Activated CD4-positive, alpha-beta T cell treated with anti-CD3 and anti-CD28 coated beads for 36 hours (primary cell): ENCODE measurements at regions of chr7 and their contacts with region 1.

Region 1: DNA sequence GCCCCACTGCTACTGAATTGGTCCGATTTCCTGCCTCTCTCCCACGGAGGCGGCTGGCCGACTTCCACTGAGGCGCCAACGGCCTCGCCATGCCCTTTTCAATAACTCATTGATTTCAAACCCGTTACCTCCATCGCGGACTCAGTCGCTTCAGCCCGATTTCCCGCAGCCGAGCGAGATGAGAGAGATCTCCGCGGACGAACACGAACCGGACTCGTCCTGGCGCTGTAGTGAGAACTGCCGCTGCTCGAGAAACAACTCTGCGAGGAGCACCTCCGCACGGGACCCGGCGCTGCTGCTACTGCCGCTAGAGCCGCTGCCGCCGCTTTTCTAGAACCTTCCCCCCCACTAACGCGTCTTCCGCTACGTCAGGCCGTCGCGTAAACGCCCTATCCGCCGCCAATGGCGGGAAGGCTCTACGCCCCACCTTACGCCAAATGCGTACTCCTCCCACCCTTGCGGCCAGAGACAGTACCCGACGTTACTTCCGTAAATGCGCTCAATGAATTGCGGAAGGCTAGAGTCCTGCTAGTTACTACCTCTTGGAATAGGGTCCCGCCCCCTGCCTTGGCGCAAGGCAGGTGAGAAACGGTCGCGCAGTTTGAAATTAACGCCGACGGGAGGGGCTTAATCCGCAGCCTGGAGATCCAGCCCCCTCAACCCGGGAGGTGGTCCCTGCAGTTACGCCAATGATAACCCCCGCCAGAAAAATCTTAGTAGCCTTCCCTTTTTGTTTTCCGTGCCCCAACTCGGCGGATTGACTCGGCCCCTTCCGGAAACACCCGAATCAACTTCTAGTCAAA is at the start of gene HNRNPA2B1:
- DNase-seq: peak; percentile 97
- ATAC-seq: peak; percentile 71
- H3K4me3 Mint-ChIP-seq: peak within 1 kb of the TSS; percentile 100
- H3K27ac Mint-ChIP-seq: peak within 1 kb of the TSS; percentile 100
- H3K4me1 Mint-ChIP-seq: peaks cover 36% of the 10 kb centered on the region
- H3K27me3 Mint-ChIP-seq: no peaks in the 10 kb centered on the region
- total RNA-seq, gene HNRNPA2B1: 600 to 996 TPM

Region 2: DNA sequence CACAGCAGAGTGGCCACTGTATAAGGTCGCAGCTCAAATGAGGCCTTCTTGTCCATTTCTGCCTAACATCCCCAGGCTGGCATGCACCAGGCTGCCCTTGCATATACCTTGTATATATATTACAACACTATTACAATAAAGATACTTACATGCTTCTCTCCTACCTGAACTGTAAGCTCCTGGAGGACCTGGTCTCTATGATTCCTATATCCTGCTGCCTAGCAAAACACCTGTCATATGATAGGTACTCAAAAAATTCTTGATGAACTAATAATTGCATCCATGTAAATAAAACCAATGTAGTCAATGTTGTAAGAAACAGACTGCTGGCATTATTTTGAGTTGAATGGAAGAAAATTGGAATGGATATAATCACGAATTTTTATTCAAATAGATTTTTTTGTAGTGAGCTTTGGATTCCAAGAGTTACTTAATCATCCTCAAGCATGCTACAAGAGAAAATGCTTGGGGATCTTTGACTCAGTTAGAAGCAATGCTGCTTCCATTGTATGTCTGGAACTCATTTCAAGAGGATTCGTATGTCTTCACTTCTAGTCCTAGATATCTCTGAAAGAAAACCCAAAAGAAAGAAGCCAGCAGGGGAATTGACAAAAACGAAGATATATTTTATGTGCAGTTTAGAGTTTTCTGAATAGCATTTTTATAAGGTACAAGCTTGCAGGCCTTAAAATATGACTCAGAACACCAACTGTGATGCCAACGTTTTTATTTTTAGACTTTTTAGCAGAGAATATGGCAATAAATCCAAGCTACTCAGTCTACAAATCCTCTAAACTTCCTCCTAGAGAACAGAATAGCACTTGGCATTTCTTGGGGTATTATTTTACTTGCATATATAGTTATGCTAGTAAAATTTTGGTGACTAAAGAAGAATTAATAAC is 1273.8 kb before region 1 on chr7:
- CTCF ChIA-PET with region 1: no interaction called
- POLR2A ChIA-PET with region 1: no interaction called
- intact Hi-C with region 1: no loop called
- DNase-seq: no peak
- ATAC-seq: no peak
- H3K4me3 Mint-ChIP-seq: no peak overlapping the region
- H3K27ac Mint-ChIP-seq: no peak overlapping the region
- H3K4me1 Mint-ChIP-seq: peaks cover 51% of the 10 kb centered on the region
- H3K27me3 Mint-ChIP-seq: no peaks in the 10 kb centered on the region

Region 3: GRCh38 chr7:25862260-25863037 is 338.2 kb before region 1 on chr7:
- CTCF ChIA-PET with region 1: no interaction called
- POLR2A ChIA-PET with region 1: no interaction called
- intact Hi-C with region 1: loop called (anchors 1 kb)
- DNase-seq: peak; percentile 99
- ATAC-seq: peak; percentile 94
- H3K4me3 Mint-ChIP-seq: peak overlapping the region; percentile 68
- H3K27ac Mint-ChIP-seq: peak overlapping the region; percentile 69
- H3K4me1 Mint-ChIP-seq: peaks cover 26% of the 10 kb centered on the region
- H3K27me3 Mint-ChIP-seq: peaks cover 46% of the 10 kb centered on the region

Region 4: DNA sequence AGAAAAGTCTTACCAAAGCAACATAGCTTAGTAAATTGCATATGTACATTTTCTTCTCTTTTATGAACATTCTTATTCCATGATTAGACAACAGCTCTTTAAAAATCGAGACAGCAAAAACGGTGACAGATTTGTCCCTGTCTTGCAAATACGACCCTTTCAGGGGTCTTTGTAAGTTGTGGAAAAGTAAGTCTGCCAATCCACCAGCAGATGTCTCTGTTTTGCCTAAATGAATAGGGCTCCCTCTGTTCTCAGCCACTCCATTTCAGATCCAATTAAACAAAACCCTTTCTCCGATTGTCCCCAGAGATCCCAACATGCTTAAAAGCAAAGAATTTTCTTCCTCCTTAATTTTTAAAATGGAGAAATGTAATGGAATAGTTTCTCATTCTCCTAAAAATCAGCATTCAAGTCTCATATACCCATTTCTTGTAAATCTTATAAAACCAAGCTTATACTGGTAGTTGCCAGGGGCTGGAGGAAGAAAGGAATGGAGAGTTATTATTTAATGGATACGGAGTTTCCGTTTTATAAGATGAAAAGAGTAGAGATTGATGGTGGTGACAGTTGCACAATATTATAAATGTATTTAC is 109.6 kb before region 1 on chr7:
- CTCF ChIA-PET with region 1: interaction called, 24 read pairs
- POLR2A ChIA-PET with region 1: interaction called, 6 read pairs
- intact Hi-C with region 1: loop called in 1 of 2 experiments (anchors 1 kb)
- DNase-seq: no peak
- ATAC-seq: peak; percentile 71
- H3K4me3 Mint-ChIP-seq: no peak overlapping the region
- H3K27ac Mint-ChIP-seq: peak overlapping the region; percentile 1
- H3K4me1 Mint-ChIP-seq: peaks cover 20% of the 10 kb centered on the region
- H3K27me3 Mint-ChIP-seq: no peaks in the 10 kb centered on the region

Region 5: GRCh38 chr7:26187380-26188205 is 13.1 kb before region 1 on chr7:
- CTCF ChIA-PET with region 1: interaction called, 29 read pairs
- POLR2A ChIA-PET with region 1: interaction called, 68 read pairs
- intact Hi-C with region 1: loop called (anchors 1 kb)
- DNase-seq: no peak
- ATAC-seq: peak; percentile 21
- H3K4me3 Mint-ChIP-seq: peak overlapping the region; percentile 14
- H3K27ac Mint-ChIP-seq: peak overlapping the region; percentile 77
- H3K4me1 Mint-ChIP-seq: peaks cover 68% of the 10 kb centered on the region
- H3K27me3 Mint-ChIP-seq: no peaks in the 10 kb centered on the region

Region 6: DNA sequence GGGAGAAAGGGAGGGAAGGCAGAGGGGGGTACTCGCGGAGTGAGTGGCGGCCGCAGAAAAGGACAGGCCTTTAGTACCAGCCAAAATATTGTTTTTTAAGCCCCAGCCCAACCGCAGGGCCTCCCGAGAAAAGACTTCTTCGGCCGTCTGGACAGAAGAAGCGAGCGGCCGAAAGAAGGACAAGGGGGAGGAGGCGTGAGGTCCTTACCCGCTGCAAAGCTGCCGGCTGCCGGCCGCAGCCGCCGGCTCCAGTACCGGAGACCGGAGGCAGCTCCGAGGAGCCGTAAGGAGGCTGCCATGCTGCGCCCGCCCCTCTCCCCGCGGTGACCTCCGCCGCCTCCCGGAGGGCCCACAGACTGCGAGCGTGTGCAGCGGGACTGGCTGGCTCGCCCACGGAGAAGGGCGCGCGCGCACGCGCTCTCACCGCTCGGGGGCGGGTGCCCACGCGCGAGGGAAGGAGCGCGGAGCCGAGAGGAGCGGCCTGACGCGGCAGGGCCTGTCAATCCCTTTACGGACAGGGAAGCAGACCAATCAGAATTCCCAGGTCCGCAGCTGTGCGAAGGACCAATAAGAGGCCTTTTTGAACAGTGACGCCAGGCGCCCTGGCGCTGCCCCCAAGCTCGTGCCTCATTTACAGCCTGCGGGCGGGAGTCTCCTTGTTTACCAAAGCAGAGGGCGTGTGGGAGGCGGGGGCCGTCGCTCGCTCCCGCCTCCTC is 1462.0 kb after region 1 on chr7 and contains the start of gene HIBADH:
- CTCF ChIA-PET with region 1: no interaction called
- POLR2A ChIA-PET with region 1: no interaction called
- intact Hi-C with region 1: loop called in 1 of 2 experiments (anchors 2 kb)
- DNase-seq: peak; percentile 95
- ATAC-seq: peak; percentile 99
- H3K4me3 Mint-ChIP-seq: peak within 1 kb of the TSS; percentile 82
- H3K27ac Mint-ChIP-seq: peak within 1 kb of the TSS; percentile 74
- H3K4me1 Mint-ChIP-seq: peaks cover 8% of the 10 kb centered on the region
- H3K27me3 Mint-ChIP-seq: no peaks in the 10 kb centered on the region
- total RNA-seq, gene HIBADH: 20.3 to 20.5 TPM